Caco-2 (cell line): ENCODE measurements at regions of chr3 and their contacts with region 1.

Region 1: DNA sequence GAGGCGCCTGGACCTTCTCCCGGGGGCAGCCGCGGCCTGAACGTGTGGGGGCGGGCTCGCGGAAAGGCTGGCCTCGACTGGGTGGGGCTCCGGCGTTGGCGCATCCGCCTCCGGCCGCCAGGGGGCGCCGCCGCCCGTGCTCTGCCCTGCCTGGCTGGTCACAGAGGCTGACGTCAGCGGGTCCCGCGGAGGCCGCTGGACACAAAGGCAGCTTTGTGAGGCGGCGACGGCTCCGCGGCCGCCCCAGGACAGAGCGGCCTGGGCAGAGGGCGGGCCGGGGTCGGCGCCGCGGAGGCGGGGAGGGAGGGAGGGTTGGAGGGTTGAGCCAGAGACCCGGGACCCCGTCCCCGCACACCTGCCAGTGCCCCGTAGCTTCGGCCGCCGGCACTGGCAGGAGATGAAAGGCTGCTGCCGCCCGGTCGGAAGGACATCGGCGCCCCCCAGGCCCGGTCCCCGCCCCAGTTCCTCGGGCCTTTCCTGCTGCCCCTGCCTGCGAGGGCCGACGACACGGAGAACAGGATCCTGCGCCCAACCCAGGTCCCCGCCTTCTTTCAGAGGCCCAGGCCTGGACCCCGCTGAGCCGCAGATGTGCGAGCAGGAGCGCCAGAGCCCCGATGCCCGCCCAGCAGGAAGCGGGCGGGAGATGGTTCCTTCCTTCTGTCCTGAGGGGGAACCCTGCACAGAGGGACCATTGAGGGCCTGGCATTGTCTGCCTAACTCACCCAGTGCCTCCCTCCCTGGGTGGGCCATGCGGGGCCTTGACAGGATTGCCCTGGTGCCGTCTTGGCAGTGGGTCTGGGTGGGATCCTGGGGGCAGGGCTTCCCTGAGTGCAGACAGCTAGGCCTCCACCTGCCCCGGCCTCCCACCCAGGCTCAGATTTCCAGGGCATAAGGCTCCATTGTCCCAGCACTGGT is 8.7 kb upstream of the SEMA3B start:
- DNase-seq: peak; percentile 90 to 95
- H3K4me3 ChIP-seq: peak overlapping the region; percentile 48
- H3K4me3 Mint-ChIP-seq: peak overlapping the region; percentile 63
- H3K27ac Mint-ChIP-seq: peak overlapping the region; percentile 70
- H3K4me1 ChIP-seq: peaks cover 34% of the 10 kb centered on the region
- H3K4me1 Mint-ChIP-seq: peaks cover 12% of the 10 kb centered on the region
- H3K27me3 ChIP-seq: no peaks in the 10 kb centered on the region
- H3K27me3 Mint-ChIP-seq: no peaks in the 10 kb centered on the region
- CTCF ChIP-seq: peak; percentile 80 to 82

Region 2: GRCh38 chr3:49759226-49759625 is 501.1 kb before region 1 on chr3:
- CTCF ChIA-PET with region 1: no interaction called
- POLR2A ChIA-PET with region 1: no interaction called
- intact Hi-C with region 1: no loop called
- DNase-seq: no peak
- H3K4me3 ChIP-seq: no peak overlapping the region
- H3K4me3 Mint-ChIP-seq: no peak overlapping the region
- H3K27ac Mint-ChIP-seq: no peak overlapping the region
- H3K4me1 ChIP-seq: no peaks in the 10 kb centered on the region
- H3K4me1 Mint-ChIP-seq: no peaks in the 10 kb centered on the region
- H3K27me3 ChIP-seq: no peaks in the 10 kb centered on the region
- H3K27me3 Mint-ChIP-seq: no peaks in the 10 kb centered on the region
- CTCF ChIP-seq: no peak

Region 3: DNA sequence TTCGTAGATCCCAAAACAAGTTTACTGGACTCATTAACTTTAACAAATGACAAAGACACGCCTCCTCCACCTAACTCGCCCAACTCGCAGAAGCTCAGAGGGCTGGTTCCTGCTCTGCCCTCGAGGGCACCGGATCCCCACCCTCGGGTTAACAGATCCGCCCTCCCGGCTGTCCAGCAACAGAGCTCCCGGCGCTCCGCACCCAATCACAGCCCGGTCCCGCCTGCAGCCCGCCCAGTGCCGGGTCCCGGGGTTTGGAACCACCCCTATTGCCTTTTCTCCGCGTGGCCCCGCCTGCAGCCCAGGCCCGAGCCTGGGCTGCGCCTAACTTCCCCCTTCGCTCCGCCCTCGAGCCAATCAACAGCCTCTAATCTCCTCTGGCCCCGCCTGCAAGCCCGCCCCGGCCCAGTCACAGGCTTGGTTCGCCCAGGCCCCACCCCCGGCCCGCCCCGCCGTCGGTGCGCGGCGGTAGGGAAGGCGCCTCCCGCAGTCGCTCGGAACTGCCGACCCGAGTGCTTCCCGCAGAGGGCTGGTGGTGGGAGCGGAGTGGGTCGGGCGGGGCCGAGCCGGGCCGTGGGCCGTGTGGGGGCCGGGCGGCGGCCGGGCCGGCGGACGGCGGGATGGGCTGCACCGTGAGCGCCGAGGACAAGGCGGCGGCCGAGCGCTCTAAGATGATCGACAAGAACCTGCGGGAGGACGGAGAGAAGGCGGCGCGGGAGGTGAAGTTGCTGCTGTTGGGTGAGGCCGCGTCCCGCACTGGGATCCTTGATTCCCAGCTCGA is 24.4 kb before region 1 on chr3 and contains the start of gene GNAI2:
- CTCF ChIA-PET with region 1: interaction called, 13 read pairs
- POLR2A ChIA-PET with region 1: interaction called, 16 read pairs
- intact Hi-C with region 1: no loop called
- DNase-seq: peak; percentile 98 to 99
- H3K4me3 ChIP-seq: peak within 1 kb of the TSS; percentile 52
- H3K4me3 Mint-ChIP-seq: peak within 1 kb of the TSS; percentile 94
- H3K27ac Mint-ChIP-seq: peak within 1 kb of the TSS; percentile 82
- H3K4me1 ChIP-seq: peaks cover 23% of the 10 kb centered on the region
- H3K4me1 Mint-ChIP-seq: peaks cover 13% of the 10 kb centered on the region
- H3K27me3 ChIP-seq: no peaks in the 10 kb centered on the region
- H3K27me3 Mint-ChIP-seq: no peaks in the 10 kb centered on the region
- CTCF ChIP-seq: no peak
- total RNA-seq, gene GNAI2: 59.3 and 62.0 TPM in 2 replicates

Region 4: GRCh38 chr3:50272911-50273693 is 12.8 kb after region 1 on chr3:
- CTCF ChIA-PET with region 1: interaction called, 10 read pairs
- POLR2A ChIA-PET with region 1: interaction called, 5 read pairs
- intact Hi-C with region 1: loop called (anchors 1 kb)
- DNase-seq: peak; percentile 80 to 92
- H3K4me3 ChIP-seq: no peak overlapping the region
- H3K4me3 Mint-ChIP-seq: no peak overlapping the region
- H3K27ac Mint-ChIP-seq: peak overlapping the region; percentile 45
- H3K4me1 ChIP-seq: peaks cover 55% of the 10 kb centered on the region
- H3K4me1 Mint-ChIP-seq: peaks cover 33% of the 10 kb centered on the region
- H3K27me3 ChIP-seq: no peaks in the 10 kb centered on the region
- H3K27me3 Mint-ChIP-seq: no peaks in the 10 kb centered on the region
- CTCF ChIP-seq: peak; percentile 92 to 97

Region 5: DNA sequence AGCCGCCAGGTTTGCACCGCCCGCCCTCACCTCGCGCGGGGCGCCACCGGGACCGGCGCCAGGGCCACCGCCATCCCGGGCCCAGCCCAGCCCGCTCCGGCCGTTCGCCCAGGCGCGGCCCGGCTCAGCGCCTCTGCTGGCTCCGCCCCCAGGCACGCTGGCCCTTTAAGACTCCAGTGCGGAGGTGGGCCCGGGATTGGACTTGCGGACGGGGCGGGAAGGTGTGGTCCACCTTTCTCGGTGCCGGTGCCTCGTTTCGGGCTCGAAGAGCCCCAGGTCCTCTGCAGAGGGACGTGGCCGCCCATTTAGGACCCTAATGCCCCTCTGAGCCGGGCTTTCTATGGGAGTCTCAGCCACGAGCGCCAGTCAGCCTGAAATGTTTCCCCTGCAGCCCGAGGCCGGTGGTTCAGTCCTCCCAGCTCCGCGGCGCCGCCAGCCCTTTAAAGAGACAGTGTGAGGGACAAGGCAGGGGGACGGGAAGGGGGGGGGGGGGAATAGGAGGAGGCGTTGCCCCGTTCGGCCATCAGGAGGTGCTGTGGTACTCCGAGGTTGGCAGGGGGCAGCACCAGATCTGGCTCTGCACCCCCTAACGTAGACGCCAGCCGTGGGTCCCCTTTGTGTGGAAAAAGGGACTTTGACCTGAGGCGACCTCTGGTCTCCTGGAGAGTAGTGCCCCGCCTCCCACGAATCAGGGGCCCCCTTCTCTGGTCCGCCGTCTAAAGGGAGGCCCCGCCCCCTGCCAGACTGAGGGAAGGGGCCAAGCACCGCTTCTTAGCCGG is 61.2 kb after region 1 on chr3:
- CTCF ChIA-PET with region 1: interaction called, 9 read pairs
- POLR2A ChIA-PET with region 1: no interaction called
- intact Hi-C with region 1: loop called (anchors 1 kb)
- DNase-seq: peak; percentile 92 to 94
- H3K4me3 ChIP-seq: peak overlapping the region; percentile 58
- H3K4me3 Mint-ChIP-seq: peak overlapping the region; percentile 81
- H3K27ac Mint-ChIP-seq: peak overlapping the region; percentile 96
- H3K4me1 ChIP-seq: peaks cover 33% of the 10 kb centered on the region
- H3K4me1 Mint-ChIP-seq: peaks cover 6% of the 10 kb centered on the region
- H3K27me3 ChIP-seq: no peaks in the 10 kb centered on the region
- H3K27me3 Mint-ChIP-seq: no peaks in the 10 kb centered on the region
- CTCF ChIP-seq: peak; percentile 67 to 68